ENCODE measurements at regions of chr1 and their contacts with region 1.

Region 1: GRCh38 chr1:7366955-7367665 is 404.0 kb upstream of the VAMP3 start:
- DNase-seq: no peak
- ATAC-seq: peak in 1 of 2 donors; percentile 15

Region 2: GRCh38 chr1:7290971-7291970 is 75.8 kb before region 1 on chr1:
- intact Hi-C with region 1: loop called in 1 of 2 experiments (anchors 5 kb)
- DNase-seq: peak; percentile 52
- ATAC-seq: peak; percentile 87 to 91

Region 3: GRCh38 chr1:7454052-7454815 is 87.1 kb after region 1 on chr1:
- intact Hi-C with region 1: no loop called
- DNase-seq: no peak
- ATAC-seq: peak; percentile 44 to 57

Measured in left cardiac atrium (tissue), 4 donors.